ENCODE measurements at regions of chr7 and their contacts with region 1.

Region 1: GRCh38 chr7:97027427-97028234 is 3.0 kb upstream of the DLX5 start:
- DNase-seq: peak; percentile 83
- H3K4me3 ChIP-seq: peak overlapping the region; percentile 7 to 48 (median 40)
- H3K27ac ChIP-seq: peak overlapping the region in 1 of 4 donors; percentile 23
- H3K4me1 ChIP-seq: peaks cover 0 to 38% (median 36%) of the 10 kb centered on the region in 4 donors
- H3K27me3 ChIP-seq: peaks cover 35 to 71% (median 54%) of the 10 kb centered on the region in 3 donors
- CTCF ChIP-seq: peak; percentile 58 to 82 (median 73)
- EP300 ChIP-seq: no peak
- POLR2A ChIP-seq: no peak

Region 2: DNA sequence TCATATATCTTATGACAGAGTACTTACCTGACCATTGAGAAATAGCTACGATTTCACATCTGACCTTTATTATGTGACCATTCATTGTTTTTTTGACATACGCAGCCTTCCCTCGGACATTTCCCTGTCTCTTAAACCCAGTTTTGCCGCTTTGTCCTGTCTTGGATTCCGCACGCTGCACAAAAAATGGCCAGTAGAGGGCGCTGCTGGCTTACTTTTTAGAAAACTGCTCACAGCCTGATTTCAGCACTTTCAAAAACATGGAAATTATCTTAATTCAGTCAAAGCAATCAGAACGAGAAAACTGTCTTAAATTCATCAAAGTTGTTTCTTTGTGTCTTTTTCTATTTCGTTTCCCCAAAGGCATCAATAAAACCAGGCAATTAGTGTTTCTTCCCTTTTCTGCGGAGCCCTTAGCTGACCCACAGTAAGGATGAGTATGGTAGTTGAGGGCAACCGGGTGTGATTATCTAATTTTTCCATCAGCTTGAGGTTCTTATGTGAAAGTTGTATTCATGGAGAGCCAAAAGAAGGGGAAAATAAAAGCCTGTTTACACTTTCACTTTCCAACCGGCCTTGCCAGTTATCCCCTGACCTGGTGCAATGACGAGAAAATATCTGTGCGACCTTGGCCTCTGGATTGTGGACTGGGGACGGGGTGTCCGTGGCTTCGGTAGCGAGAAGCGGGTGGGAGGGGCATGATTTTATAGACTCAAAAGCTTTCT is 1110.9 kb before region 1 on chr7:
- intact Hi-C with region 1: loop called (anchors 1 kb)
- DNase-seq: peak; percentile 81
- H3K4me3 ChIP-seq: peak overlapping the region in 3 of 4 donors; percentile 5 to 25 (median 10)
- H3K27ac ChIP-seq: no peak overlapping the region
- H3K4me1 ChIP-seq: peaks cover 0 to 8% (median 2%) of the 10 kb centered on the region in 4 donors
- H3K27me3 ChIP-seq: no peaks in the 10 kb centered on the region
- CTCF ChIP-seq: peak; percentile 53 to 93 (median 74)
- EP300 ChIP-seq: no peak
- POLR2A ChIP-seq: no peak

Region 3: GRCh38 chr7:96075510-96076349 is 951.9 kb before region 1 on chr7:
- intact Hi-C with region 1: loop called (anchors 1 kb)
- DNase-seq: peak; percentile 72
- H3K4me3 ChIP-seq: peak overlapping the region; percentile 37 to 53 (median 48)
- H3K27ac ChIP-seq: no peak overlapping the region
- H3K4me1 ChIP-seq: peaks cover 0 to 7% (median 5%) of the 10 kb centered on the region in 4 donors
- H3K27me3 ChIP-seq: peaks cover 0 to 6% (median 0%) of the 10 kb centered on the region in 3 donors
- CTCF ChIP-seq: peak; percentile 9 to 73 (median 64)
- EP300 ChIP-seq: no peak
- POLR2A ChIP-seq: no peak

Region 4: DNA sequence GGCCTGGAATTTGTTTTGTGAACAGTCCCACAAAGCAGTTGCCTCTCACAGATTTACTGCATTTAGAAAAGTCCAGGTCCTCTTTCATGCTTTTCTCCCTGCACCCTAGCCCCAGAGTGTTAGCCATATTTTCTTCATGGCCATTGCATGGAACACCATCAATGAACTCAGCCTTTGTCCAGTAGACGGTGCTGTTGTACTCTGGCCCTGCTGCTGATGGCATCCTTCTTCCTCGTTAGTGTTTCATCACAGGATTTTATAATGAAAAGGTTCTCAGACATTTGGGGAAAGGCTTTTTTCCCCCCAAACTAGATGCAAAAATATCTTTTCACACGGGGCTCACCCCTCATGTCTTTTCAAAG is 612.7 kb before region 1 on chr7:
- intact Hi-C with region 1: loop called (anchors 10 kb)
- DNase-seq: no peak
- H3K4me3 ChIP-seq: no peak overlapping the region
- H3K27ac ChIP-seq: no peak overlapping the region
- H3K4me1 ChIP-seq: no peaks in the 10 kb centered on the region
- H3K27me3 ChIP-seq: no peaks in the 10 kb centered on the region
- CTCF ChIP-seq: peak in 3 of 4 experiments; percentile 26 to 37 (median 26)
- EP300 ChIP-seq: no peak
- POLR2A ChIP-seq: no peak

Region 5: GRCh38 chr7:97078023-97078969 is 50.7 kb after region 1 on chr7:
- intact Hi-C with region 1: no loop called
- DNase-seq: no peak
- H3K4me3 ChIP-seq: no peak overlapping the region
- H3K27ac ChIP-seq: no peak overlapping the region
- H3K4me1 ChIP-seq: no peaks in the 10 kb centered on the region
- H3K27me3 ChIP-seq: no peaks in the 10 kb centered on the region
- CTCF ChIP-seq: no peak
- EP300 ChIP-seq: no peak
- POLR2A ChIP-seq: no peak

Region 6: DNA sequence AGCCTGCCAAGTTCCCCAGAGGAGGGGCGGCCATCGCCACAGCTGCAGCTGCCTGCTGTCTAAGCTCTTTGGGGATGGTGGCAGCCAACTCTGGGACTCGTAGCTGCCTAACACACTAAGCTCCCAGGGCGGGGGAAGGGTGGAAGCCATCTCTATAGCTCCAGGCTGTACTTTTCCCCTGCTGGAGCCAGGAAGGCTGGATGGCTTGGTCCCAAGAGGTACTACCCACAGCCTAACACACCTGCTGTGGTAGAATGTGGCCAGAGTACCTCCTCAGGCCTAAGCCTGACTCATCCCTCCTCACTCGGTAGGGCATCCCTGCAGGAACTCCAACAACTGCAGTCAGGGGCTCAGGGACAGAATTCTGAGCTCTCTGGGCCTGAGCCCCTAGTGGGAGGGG is 552.6 kb after region 1 on chr7:
- intact Hi-C with region 1: no loop called
- DNase-seq: no peak
- H3K4me3 ChIP-seq: no peak overlapping the region
- H3K27ac ChIP-seq: no peak overlapping the region
- H3K4me1 ChIP-seq: no peaks in the 10 kb centered on the region
- H3K27me3 ChIP-seq: no peaks in the 10 kb centered on the region
- CTCF ChIP-seq: no peak
- EP300 ChIP-seq: no peak
- POLR2A ChIP-seq: no peak

Measured in sigmoid colon (tissue), 7 donors.